ENCODE measurements at regions of chr11 and their contacts with region 1.

Region 1: DNA sequence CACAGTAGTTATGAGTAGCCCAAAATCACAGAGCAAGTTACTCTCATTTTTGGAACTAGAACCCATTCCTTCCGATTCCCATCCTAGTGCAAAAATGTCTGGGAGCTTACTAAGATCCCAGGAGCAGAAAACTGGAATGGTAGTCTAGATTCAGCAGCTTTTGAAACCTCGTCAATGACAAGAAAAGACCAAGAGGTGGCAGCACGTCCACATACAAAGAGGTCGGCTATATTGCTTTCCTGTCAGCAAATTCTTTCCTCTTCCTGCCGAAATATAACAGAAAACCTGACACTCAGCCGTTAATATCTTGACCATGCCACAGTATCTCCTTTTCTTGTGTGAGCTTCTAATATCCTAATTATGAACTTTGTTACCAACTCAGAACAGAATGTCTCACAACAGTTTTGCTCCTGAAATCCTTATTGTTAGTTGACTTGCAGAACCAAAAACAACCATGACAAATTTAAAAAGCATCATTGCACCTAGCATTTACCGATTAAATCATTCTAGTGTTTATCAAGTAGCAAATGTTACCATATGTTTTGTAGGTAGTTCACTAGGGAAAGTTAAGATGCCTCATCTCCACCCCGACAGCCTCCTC is 92.8 kb upstream of the OR9G4 start:
- DNase-seq: peak; percentile 55
- ATAC-seq: peak; percentile 78; the same call in 1 of the 2 replicates
- H3K4me3 ChIP-seq: no peak overlapping the region
- H3K27ac ChIP-seq: no peak overlapping the region
- H3K4me1 ChIP-seq: no peaks in the 10 kb centered on the region
- H3K27me3 ChIP-seq: no peaks in the 10 kb centered on the region
- CTCF ChIP-seq: peak; percentile 76

Region 2: DNA sequence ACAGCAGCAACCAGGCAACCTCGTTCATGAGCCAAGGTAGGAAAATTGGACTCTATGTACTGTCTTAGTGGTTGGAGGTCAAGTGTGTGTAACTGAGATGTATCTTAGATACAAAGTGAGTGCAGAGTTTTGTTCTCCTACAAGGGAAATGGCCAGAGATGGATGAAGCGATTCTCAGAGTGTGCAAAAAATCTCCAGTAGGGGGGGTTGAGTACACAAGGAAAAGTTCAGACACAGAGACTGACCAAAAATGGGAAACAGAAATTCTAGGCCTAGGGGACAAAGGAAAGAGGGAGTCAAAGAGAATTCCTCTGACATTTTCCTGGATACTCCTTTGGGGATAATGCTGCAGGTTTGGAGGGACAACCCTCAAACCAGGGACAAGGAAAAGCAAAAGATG is 109.2 kb after region 1 on chr11:
- CTCF ChIA-PET with region 1: no interaction called
- POLR2A ChIA-PET with region 1: no interaction called
- in situ Hi-C with region 1: no loop called
- intact Hi-C with region 1: no loop called
- DNase-seq: no peak
- ATAC-seq: no peak
- H3K4me3 ChIP-seq: no peak overlapping the region
- H3K27ac ChIP-seq: no peak overlapping the region
- H3K4me1 ChIP-seq: no peaks in the 10 kb centered on the region
- H3K27me3 ChIP-seq: no peaks in the 10 kb centered on the region
- CTCF ChIP-seq: no peak

Region 3: DNA sequence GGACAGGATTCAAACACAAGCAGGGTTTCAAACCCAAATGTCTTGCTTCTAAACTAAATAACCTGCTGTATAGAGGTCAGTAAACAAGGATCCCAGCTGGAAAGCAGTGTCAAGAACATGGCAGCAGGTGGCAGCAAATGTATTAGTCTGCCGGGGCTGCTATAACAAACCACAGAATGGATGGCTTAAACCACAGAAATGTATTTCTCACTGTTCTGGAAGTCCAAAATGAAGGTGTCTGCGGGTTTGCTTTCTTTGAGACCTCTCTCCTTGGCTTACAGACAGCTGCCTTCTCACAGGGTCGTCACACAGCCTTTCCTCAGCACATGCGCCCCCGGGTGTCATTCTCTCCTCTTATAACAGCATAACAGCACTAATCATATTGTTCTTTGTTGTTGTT is 275.3 kb after region 1 on chr11:
- CTCF ChIA-PET with region 1: no interaction called
- POLR2A ChIA-PET with region 1: no interaction called
- in situ Hi-C with region 1: no loop called
- intact Hi-C with region 1: loop called (anchors 1 kb)
- DNase-seq: peak; percentile 8
- ATAC-seq: peak; percentile 82
- H3K4me3 ChIP-seq: no peak overlapping the region
- H3K27ac ChIP-seq: no peak overlapping the region
- H3K4me1 ChIP-seq: no peaks in the 10 kb centered on the region
- H3K27me3 ChIP-seq: peaks cover under 1% of the 10 kb centered on the region; the same call in 1 of the 2 replicates
- CTCF ChIP-seq: peak; percentile 80

Region 4: DNA sequence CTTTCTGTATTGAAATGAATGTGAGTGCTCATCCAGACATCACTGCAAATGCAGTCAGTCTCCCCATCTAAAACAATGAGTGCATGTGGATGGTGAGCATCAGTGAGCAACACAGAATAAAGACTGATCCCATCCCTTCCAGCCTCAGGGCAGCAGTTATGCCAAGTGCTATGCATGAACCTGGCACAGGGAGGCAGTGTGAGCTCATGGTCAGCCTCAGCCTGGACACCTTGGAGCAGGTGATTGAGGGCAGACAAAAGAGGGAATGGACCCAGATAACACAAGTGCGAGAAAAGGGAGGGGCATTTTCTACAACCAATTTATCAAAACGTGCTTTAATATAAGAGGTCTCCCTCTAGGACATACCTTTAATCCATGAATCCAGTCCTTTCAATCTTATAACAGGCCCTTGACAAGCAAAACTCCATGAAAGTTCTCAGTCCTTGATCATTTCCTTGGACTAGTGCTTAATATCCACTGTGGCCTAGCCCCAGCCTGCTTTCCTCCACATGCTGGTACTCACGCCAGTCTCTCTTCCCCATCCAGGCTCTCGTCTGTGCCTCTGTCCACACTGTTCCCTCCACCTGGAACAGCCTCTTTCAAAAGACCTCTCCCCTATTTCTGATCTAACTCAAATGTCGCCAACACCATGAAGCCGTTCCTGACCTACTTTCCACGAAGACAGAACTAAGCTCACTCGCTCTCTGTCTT is 289.9 kb after region 1 on chr11:
- CTCF ChIA-PET with region 1: no interaction called
- POLR2A ChIA-PET with region 1: no interaction called
- in situ Hi-C with region 1: loop called (anchors 10 kb)
- intact Hi-C with region 1: no loop called
- DNase-seq: no peak
- ATAC-seq: peak; percentile 76; the same call in 1 of the 2 replicates
- H3K4me3 ChIP-seq: no peak overlapping the region
- H3K27ac ChIP-seq: no peak overlapping the region
- H3K4me1 ChIP-seq: no peaks in the 10 kb centered on the region
- H3K27me3 ChIP-seq: peaks cover 13% of the 10 kb centered on the region
- CTCF ChIP-seq: peak; percentile 57